HepG2 (cell line): ENCODE measurements at regions of chr11 and their contacts with region 1.

Region 1: GRCh38 chr11:94417386-94417987 is 16.3 kb upstream of the GPR83 start:
- DNase-seq: peak; percentile 25
- ATAC-seq: peak; percentile 64; the same call in 2 of the 3 replicates
- H3K4me3 ChIP-seq: no peak overlapping the region
- H3K27ac ChIP-seq: no peak overlapping the region
- H3K4me1 ChIP-seq: no peaks in the 10 kb centered on the region
- H3K27me3 ChIP-seq: no peaks in the 10 kb centered on the region
- CTCF ChIP-seq: peak; percentile 58
- EP300 ChIP-seq: no peak
- POLR2A ChIP-seq: no peak
- RAD21 ChIP-seq: peak; percentile 52; the same call in 1 of the 2 replicates

Region 2: GRCh38 chr11:93895106-93895862 is 522.2 kb before region 1 on chr11:
- CTCF ChIA-PET with region 1: no interaction called
- POLR2A ChIA-PET with region 1: no interaction called
- in situ Hi-C with region 1: no loop called
- intact Hi-C with region 1: loop called (anchors 1 kb)
- DNase-seq: peak; percentile 37
- ATAC-seq: peak; percentile 78
- H3K4me3 ChIP-seq: no peak overlapping the region
- H3K27ac ChIP-seq: no peak overlapping the region
- H3K4me1 ChIP-seq: no peaks in the 10 kb centered on the region
- H3K27me3 ChIP-seq: peaks cover 0 to 5% of the 10 kb centered on the region in 2 experiments; a peak in 1 of 5 replicates
- CTCF ChIP-seq: peak; percentile 73
- EP300 ChIP-seq: no peak
- POLR2A ChIP-seq: no peak
- RAD21 ChIP-seq: 0 out of 2 replicates have a peak, but pooled peaks have one; percentile 35

Region 3: DNA sequence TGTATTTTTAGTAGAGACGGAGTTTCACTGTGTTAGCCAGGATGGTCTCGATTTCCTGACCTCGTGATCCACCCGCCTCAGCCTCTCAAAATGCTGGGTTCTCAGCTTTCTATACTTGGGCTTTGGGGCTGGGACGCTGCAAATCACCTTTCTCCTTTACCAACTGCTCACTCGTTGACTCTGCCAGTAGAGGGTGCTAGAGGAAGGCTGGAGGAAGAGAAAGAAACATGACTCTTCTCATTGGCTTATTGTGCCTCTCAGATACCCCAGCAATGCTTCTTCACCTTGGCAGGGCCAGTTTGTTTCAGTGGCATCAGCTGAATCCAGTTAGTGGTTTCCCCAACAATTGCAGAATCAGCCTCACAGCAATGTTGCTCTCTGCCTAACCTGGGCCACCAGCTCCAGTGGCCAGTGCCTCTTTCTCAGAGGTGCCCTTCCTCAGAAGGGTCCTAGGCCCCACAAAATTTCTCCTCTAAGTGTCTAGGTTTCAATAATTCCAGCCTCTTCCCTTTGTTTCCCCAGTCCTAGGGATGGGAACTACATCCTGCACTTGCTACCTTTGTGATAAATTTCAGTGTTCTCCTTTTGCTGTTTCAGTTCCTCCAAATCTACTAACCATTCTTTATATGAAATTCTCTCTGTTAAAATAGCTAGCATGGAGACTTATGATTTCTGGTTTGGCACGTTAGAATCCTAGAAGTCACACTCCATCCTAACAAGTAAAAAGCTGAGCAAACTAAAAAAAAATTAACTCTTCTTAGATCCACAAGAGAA is 495.6 kb before region 1 on chr11:
- CTCF ChIA-PET with region 1: no interaction called
- POLR2A ChIA-PET with region 1: no interaction called
- in situ Hi-C with region 1: no loop called
- intact Hi-C with region 1: loop called (anchors 10 kb)
- DNase-seq: peak; percentile 56
- ATAC-seq: peak; percentile 85
- H3K4me3 ChIP-seq: no peak overlapping the region
- H3K27ac ChIP-seq: no peak overlapping the region
- H3K4me1 ChIP-seq: peaks cover 19% of the 10 kb centered on the region
- H3K27me3 ChIP-seq: no peaks in the 10 kb centered on the region
- CTCF ChIP-seq: peak; percentile 87
- EP300 ChIP-seq: no peak
- POLR2A ChIP-seq: no peak
- RAD21 ChIP-seq: peak; percentile 76

Region 4: GRCh38 chr11:94171693-94172440 is 245.6 kb before region 1 on chr11:
- CTCF ChIA-PET with region 1: interaction called, 4 read pairs
- POLR2A ChIA-PET with region 1: no interaction called
- in situ Hi-C with region 1: loop called (anchors 25 kb)
- intact Hi-C with region 1: loop called (anchors 1 kb)
- DNase-seq: peak; percentile 31
- ATAC-seq: peak; percentile 96
- H3K4me3 ChIP-seq: no peak overlapping the region
- H3K27ac ChIP-seq: no peak overlapping the region
- H3K4me1 ChIP-seq: no peaks in the 10 kb centered on the region
- H3K27me3 ChIP-seq: no peaks in the 10 kb centered on the region
- CTCF ChIP-seq: peak; percentile 78
- EP300 ChIP-seq: no peak
- POLR2A ChIP-seq: no peak
- RAD21 ChIP-seq: no peak

Region 5: DNA sequence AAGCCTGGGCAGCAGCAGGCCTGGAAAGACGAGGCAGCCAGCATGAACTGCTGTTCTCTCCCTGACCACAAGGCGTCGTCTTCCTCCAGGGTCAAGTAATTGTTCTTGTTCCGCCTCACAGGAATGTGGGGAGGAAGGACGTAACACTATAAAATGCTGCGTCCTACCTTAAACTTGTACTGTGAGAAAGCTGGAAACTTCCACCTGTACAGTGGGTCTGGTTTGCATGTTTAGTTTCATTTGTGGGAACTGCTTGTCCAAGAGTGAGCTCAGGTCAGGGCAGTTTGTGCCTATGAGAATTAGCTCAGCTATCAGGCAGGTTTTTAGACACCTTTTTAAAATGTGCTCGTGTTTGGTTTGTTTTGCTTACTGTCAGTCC is 233.6 kb before region 1 on chr11:
- CTCF ChIA-PET with region 1: interaction called, 3 read pairs
- POLR2A ChIA-PET with region 1: no interaction called
- in situ Hi-C with region 1: loop called (anchors 25 kb)
- intact Hi-C with region 1: no loop called
- DNase-seq: peak; percentile 33
- ATAC-seq: peak; percentile 85
- H3K4me3 ChIP-seq: no peak overlapping the region
- H3K27ac ChIP-seq: no peak overlapping the region
- H3K4me1 ChIP-seq: peaks cover 8% of the 10 kb centered on the region; the same call in 1 of the 2 replicates
- H3K27me3 ChIP-seq: no peaks in the 10 kb centered on the region
- CTCF ChIP-seq: peak; percentile 91
- EP300 ChIP-seq: no peak
- POLR2A ChIP-seq: no peak
- RAD21 ChIP-seq: peak; percentile 66

Region 6: DNA sequence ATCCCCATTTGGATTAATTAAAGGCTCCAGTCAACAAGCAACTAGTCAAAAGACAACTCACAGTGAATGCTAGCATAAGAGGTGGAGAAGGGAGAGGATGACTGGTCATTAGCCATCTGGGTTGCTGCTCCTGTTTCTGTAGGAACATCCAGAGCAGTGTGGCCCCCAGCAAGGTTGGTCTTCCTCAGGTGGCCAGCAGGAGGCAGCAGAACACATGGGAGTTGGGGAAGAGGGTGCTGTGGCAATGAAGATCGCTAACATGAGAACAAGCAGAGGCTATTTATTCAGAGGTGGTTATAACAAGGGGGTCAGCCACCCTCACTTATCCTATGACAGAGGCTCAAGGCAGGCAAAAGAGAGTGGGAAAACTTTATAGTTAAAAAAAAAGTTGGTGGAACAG is 91.8 kb before region 1 on chr11:
- CTCF ChIA-PET with region 1: interaction called, 10 read pairs
- POLR2A ChIA-PET with region 1: no interaction called
- in situ Hi-C with region 1: loop called (anchors 5 kb)
- intact Hi-C with region 1: loop called (anchors 1 kb)
- DNase-seq: peak; percentile 39
- ATAC-seq: peak; percentile 95
- H3K4me3 ChIP-seq: no peak overlapping the region
- H3K27ac ChIP-seq: no peak overlapping the region
- H3K4me1 ChIP-seq: no peaks in the 10 kb centered on the region
- H3K27me3 ChIP-seq: no peaks in the 10 kb centered on the region; a peak in 1 of 5 replicates
- CTCF ChIP-seq: peak; percentile 84
- EP300 ChIP-seq: no peak
- POLR2A ChIP-seq: no peak
- RAD21 ChIP-seq: peak; percentile 71

Region 7: DNA sequence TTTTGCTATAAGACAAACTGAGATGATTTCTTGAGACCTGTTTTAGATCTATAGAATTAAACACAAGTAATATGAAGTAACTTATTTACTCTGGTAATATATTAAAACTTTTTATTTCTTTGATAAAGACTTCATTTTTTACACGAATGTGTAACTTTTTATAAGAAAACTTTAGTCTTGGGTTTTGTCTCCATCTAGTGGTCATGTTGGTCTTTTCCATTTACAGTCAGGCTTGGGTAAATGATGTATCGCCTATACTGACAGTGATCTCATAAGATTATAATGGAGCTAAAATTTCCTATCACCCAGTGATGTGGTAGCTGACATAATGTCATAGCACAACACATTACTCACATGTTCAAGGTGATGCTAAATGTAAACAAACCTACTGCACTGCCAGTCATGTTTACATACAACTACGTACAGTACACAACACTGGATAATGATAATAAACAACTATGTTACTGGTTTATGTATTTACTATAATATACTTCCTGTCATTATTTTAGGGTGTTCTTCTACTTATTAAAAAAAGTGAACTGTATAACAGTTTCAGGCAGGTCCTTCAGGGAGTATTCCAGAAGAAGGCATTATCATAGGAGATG is 87.3 kb after region 1 on chr11:
- CTCF ChIA-PET with region 1: no interaction called
- POLR2A ChIA-PET with region 1: no interaction called
- in situ Hi-C with region 1: no loop called
- intact Hi-C with region 1: loop called (anchors 2 kb)
- DNase-seq: peak; percentile 43
- ATAC-seq: peak; percentile 67
- H3K4me3 ChIP-seq: no peak overlapping the region
- H3K27ac ChIP-seq: no peak overlapping the region
- H3K4me1 ChIP-seq: peaks cover 12% of the 10 kb centered on the region
- H3K27me3 ChIP-seq: no peaks in the 10 kb centered on the region
- CTCF ChIP-seq: peak; percentile 63
- EP300 ChIP-seq: no peak
- POLR2A ChIP-seq: no peak
- RAD21 ChIP-seq: no peak